ENCODE measurements at regions of chr2 and their contacts with region 1.

Region 1: GRCh38 chr2:99818842-99819241 is 323.5 kb downstream of the AFF3 start:
- DNase-seq: no peak

Region 2: DNA sequence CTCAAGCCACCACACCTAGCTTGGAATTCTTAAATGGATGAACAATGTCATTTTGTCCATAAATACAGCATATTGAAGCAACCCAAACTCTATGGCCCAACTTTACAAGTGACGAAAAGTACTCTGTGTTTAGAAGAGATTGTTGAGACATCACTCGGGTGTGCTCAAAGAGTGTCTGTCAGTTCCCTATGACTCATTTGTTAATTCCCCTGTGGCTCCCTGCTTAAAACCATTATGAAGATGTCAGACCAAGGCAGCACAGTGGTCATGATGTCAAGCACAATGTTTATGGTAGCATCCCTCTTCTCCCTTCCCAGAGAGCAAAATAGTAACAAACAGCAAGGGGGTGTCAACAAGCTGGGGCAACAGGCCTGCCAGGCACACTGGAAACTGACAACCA is 520.8 kb before region 1 on chr2:
- intact Hi-C with region 1: no loop called
- DNase-seq: no peak

Region 3: DNA sequence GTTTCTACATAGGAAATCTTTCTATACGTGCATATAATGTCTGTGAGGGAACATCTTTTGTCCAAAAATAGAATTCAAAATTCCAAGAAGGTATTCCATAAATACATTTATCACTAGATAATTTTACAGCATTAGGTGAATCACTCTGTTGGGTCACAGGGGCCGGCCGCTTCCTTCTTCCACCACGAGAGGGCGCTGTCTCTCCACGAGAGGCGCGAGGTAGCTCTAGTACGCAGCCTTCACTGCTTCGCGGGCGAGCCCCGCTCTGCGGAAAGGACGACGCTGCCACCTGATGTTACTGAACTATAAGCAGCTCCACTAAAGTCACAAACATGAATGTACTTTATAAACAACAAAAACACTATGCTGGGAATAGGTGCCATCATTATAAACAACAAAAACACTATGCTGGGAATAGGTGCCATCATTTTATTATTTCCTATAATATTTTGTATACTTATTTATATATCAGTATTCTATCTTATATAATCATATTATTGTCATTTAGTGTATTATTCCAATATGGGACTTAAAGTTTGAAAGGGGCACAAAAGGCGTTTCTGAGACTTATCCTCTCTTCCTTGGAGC is 259.7 kb before region 1 on chr2:
- intact Hi-C with region 1: loop called (anchors 2 kb)
- DNase-seq: peak; percentile 94

Region 4: GRCh38 chr2:99850083-99850710 is 31.4 kb after region 1 on chr2:
- intact Hi-C with region 1: no loop called
- DNase-seq: no peak

Region 5: DNA sequence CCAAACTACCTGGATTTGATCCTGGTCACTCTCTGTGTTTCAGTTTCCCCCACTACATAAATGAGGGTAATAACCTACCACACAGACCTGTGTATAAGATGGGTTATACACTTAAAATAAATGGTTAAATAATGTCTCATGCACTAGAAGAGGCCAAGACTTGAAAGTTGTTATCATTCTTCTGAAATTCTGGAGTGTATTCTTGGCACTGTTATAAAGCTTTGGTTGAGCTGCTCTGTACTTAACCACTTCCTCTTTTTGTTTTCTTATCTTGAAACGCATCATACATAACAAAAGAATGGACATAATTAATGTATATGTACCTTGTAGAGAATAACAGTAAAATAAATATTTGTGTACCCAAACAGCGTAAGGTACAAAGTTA is 42.5 kb after region 1 on chr2:
- intact Hi-C with region 1: no loop called
- DNase-seq: no peak

Measured in cardiac septum (tissue), 1 donor.